CD8-positive, alpha-beta T cell (primary cell): ENCODE measurements at regions of chr20 and their contacts with region 1.

Region 1: DNA sequence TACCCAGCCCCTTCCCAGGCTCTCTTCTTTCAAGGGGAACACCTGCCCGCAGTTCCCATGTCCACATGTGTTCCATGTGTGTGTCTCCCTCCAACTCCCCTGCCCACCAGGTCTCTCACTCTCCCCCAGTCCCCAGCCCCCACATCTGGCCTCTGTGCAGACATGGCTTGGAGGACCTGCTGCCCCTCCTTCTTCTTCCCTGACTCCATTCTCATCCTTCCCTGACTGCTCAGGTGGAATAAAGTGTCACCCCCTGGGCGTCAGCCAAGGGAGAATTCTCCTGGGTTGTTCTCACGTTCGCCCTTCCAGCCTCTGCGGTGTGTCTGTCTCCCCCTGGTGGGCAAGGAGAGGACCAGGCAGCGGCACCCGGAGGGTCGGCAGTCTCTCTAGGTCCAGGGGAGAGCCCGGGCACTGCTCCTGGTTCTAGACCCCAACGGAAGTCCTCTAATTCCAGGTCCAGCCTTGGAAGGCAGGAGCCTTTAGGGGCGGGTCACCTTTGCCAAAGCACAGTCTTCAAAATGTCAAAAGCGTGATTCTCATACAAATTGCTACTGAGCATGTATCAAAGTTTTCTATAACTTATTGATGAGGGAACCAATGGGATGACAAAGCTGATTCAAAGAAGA is 50.5 kb downstream of the EBF4 start:
- DNase-seq: peak; percentile 46 to 89 (median 75)
- ATAC-seq: peak; percentile 62
- H3K4me3 ChIP-seq: peak overlapping the region in 1 of 2 experiments; percentile 0
- H3K4me3 Mint-ChIP-seq: peak overlapping the region; percentile 65
- H3K27ac ChIP-seq: peak overlapping the region in 1 of 2 experiments; percentile 80
- H3K27ac Mint-ChIP-seq: peak overlapping the region; percentile 79
- H3K4me1 ChIP-seq: peaks cover 46% of the 10 kb centered on the region
- H3K4me1 Mint-ChIP-seq: peaks cover 47% of the 10 kb centered on the region
- H3K27me3 ChIP-seq: no peaks in the 10 kb centered on the region
- H3K27me3 Mint-ChIP-seq: no peaks in the 10 kb centered on the region
- CTCF ChIP-seq: peak; percentile 86

Region 2: GRCh38 chr20:2172305-2173175 is 570.5 kb before region 1 on chr20:
- CTCF ChIA-PET with region 1: no interaction called
- POLR2A ChIA-PET with region 1: no interaction called
- intact Hi-C with region 1: no loop called
- DNase-seq: peak; percentile 32 to 81 (median 64)
- ATAC-seq: peak; percentile 58
- H3K4me3 ChIP-seq: no peak overlapping the region
- H3K4me3 Mint-ChIP-seq: no peak overlapping the region
- H3K27ac ChIP-seq: no peak overlapping the region
- H3K27ac Mint-ChIP-seq: no peak overlapping the region
- H3K4me1 ChIP-seq: peaks cover 3% of the 10 kb centered on the region
- H3K4me1 Mint-ChIP-seq: peaks cover 3% of the 10 kb centered on the region
- H3K27me3 ChIP-seq: no peaks in the 10 kb centered on the region
- H3K27me3 Mint-ChIP-seq: peaks cover 15% of the 10 kb centered on the region
- CTCF ChIP-seq: peak; percentile 82

Region 3: GRCh38 chr20:2729251-2729713 is 13.8 kb before region 1 on chr20:
- CTCF ChIA-PET with region 1: interaction called, 113 read pairs
- POLR2A ChIA-PET with region 1: interaction called, 68 read pairs
- intact Hi-C with region 1: loop called (anchors 1 kb)
- DNase-seq: peak in 7 of 9 experiments; percentile 30 to 80 (median 57)
- ATAC-seq: peak; percentile 96
- H3K4me3 ChIP-seq: peak overlapping the region in 1 of 2 experiments; percentile 41
- H3K4me3 Mint-ChIP-seq: peak overlapping the region; percentile 49
- H3K27ac ChIP-seq: peak overlapping the region; percentile 46 to 75
- H3K27ac Mint-ChIP-seq: peak overlapping the region; percentile 88
- H3K4me1 ChIP-seq: peaks cover 28% of the 10 kb centered on the region
- H3K4me1 Mint-ChIP-seq: peaks cover 27% of the 10 kb centered on the region
- H3K27me3 ChIP-seq: no peaks in the 10 kb centered on the region
- H3K27me3 Mint-ChIP-seq: peaks cover 2% of the 10 kb centered on the region
- CTCF ChIP-seq: no peak

Region 4: GRCh38 chr20:2775139-2775538 is 32.1 kb after region 1 on chr20:
- CTCF ChIA-PET with region 1: no interaction called
- POLR2A ChIA-PET with region 1: no interaction called
- intact Hi-C with region 1: no loop called
- DNase-seq: no peak
- ATAC-seq: no peak
- H3K4me3 ChIP-seq: no peak overlapping the region
- H3K4me3 Mint-ChIP-seq: no peak overlapping the region
- H3K27ac ChIP-seq: no peak overlapping the region
- H3K27ac Mint-ChIP-seq: no peak overlapping the region
- H3K4me1 ChIP-seq: no peaks in the 10 kb centered on the region
- H3K4me1 Mint-ChIP-seq: peaks cover 6% of the 10 kb centered on the region
- H3K27me3 ChIP-seq: no peaks in the 10 kb centered on the region
- H3K27me3 Mint-ChIP-seq: peaks cover 5% of the 10 kb centered on the region
- CTCF ChIP-seq: no peak

Region 5: GRCh38 chr20:2849529-2849928 is 106.5 kb after region 1 on chr20:
- CTCF ChIA-PET with region 1: interaction called, 3 read pairs
- POLR2A ChIA-PET with region 1: no interaction called
- intact Hi-C with region 1: loop called (anchors 5 kb)
- DNase-seq: no peak
- ATAC-seq: no peak
- H3K4me3 ChIP-seq: no peak overlapping the region
- H3K4me3 Mint-ChIP-seq: no peak overlapping the region
- H3K27ac ChIP-seq: no peak overlapping the region
- H3K27ac Mint-ChIP-seq: no peak overlapping the region
- H3K4me1 ChIP-seq: peaks cover 18% of the 10 kb centered on the region
- H3K4me1 Mint-ChIP-seq: peaks cover 35% of the 10 kb centered on the region
- H3K27me3 ChIP-seq: no peaks in the 10 kb centered on the region
- H3K27me3 Mint-ChIP-seq: no peaks in the 10 kb centered on the region
- CTCF ChIP-seq: no peak